HEK293 (cell line): ENCODE measurements at regions of chr1 and their contacts with region 1.

Region 1: GRCh38 chr1:103106426-103107341 is 1.6 kb downstream of the COL11A1 start:
- H3K4me3 ChIP-seq: peak overlapping the region; percentile 36
- H3K27ac ChIP-seq: no peak overlapping the region
- H3K4me1 ChIP-seq: no peaks in the 10 kb centered on the region
- CTCF ChIP-seq: no peak

Region 2: GRCh38 chr1:102879439-102879993 is 227.2 kb before region 1 on chr1:
- CTCF ChIA-PET with region 1: no interaction called
- POLR2A ChIA-PET with region 1: no interaction called
- H3K4me3 ChIP-seq: no peak overlapping the region
- H3K27ac ChIP-seq: no peak overlapping the region
- H3K4me1 ChIP-seq: no peaks in the 10 kb centered on the region
- CTCF ChIP-seq: no peak

Region 3: GRCh38 chr1:103461161-103462105 is 354.7 kb after region 1 on chr1:
- CTCF ChIA-PET with region 1: interaction called, 24 read pairs
- POLR2A ChIA-PET with region 1: no interaction called
- H3K4me3 ChIP-seq: no peak overlapping the region
- H3K27ac ChIP-seq: no peak overlapping the region
- H3K4me1 ChIP-seq: no peaks in the 10 kb centered on the region
- CTCF ChIP-seq: no peak

Region 4: DNA sequence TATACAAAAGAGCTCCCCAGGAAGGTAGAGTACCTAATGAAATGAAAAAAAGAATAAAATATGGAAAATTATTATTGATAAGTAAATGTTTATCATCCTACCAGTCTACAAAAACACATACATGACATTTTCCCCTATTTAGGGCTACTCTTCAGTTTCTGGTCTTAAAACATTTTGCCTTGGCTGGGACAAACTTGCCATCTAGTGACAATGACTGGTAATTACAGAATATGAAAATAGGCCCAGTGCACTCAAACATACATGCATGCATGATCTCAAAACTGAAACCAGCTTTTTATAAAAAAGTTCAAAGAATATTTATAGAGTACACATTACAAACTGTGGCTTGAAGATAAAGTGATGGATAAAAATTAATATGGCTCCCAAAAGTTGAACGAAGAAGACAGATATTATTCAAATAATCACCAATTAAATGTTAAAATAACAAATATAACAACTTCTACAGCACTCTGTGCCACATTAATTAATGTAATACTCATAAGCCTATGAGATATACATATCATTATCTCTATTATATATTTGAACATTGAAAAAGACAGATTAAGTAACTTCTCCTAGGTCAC is 408.3 kb after region 1 on chr1:
- CTCF ChIA-PET with region 1: interaction called, 16 read pairs
- POLR2A ChIA-PET with region 1: no interaction called
- H3K4me3 ChIP-seq: no peak overlapping the region
- H3K27ac ChIP-seq: no peak overlapping the region
- H3K4me1 ChIP-seq: no peaks in the 10 kb centered on the region
- CTCF ChIP-seq: 0 out of 2 replicates have a peak, but pooled peaks have one; percentile 12